ENCODE measurements at regions of chr3 and their contacts with region 1.

Region 1: GRCh38 chr3:147191795-147192385 is 214.5 kb downstream of the ZIC4 start:
- DNase-seq: peak; percentile 31
- H3K4me3 ChIP-seq: no peak overlapping the region
- H3K27ac ChIP-seq: no peak overlapping the region
- H3K4me1 ChIP-seq: no peaks in the 10 kb centered on the region
- H3K27me3 ChIP-seq: no peaks in the 10 kb centered on the region
- CTCF ChIP-seq: peak; percentile 86

Region 2: DNA sequence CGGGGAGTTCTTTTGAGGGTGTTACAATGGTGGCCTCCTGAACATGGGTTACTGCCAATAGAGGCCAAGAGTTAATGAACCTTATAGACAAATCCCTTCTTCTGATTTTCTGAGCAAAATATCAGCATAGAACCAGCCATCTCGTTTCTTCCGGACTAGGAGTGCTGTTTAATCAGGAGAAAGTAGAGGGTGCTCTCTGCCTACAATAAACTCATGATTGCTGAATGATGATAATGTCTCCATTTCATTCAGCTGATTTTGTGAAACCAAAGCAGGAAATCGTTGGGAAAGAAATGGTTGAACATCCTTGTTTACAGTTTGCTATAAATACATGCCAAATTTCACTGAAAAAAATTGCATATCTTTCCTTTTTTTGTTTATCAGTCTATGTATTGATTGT is 444.0 kb before region 1 on chr3:
- CTCF ChIA-PET with region 1: no interaction called
- dilution Hi-C with region 1: no loop called
- in situ Hi-C with region 1: no loop called
- intact Hi-C with region 1: loop called (anchors 1 kb)
- DNase-seq: peak; percentile 12
- H3K4me3 ChIP-seq: no peak overlapping the region
- H3K27ac ChIP-seq: no peak overlapping the region
- H3K4me1 ChIP-seq: peaks cover 10% of the 10 kb centered on the region
- H3K27me3 ChIP-seq: no peaks in the 10 kb centered on the region
- CTCF ChIP-seq: peak; percentile 39 to 44

Region 3: GRCh38 chr3:146817704-146818103 is 374.2 kb before region 1 on chr3:
- CTCF ChIA-PET with region 1: no interaction called
- dilution Hi-C with region 1: no loop called
- in situ Hi-C with region 1: loop called in 1 of 2 experiments (anchors 25 kb)
- intact Hi-C with region 1: loop called (anchors 1 kb)
- DNase-seq: no peak
- H3K4me3 ChIP-seq: no peak overlapping the region
- H3K27ac ChIP-seq: no peak overlapping the region
- H3K4me1 ChIP-seq: no peaks in the 10 kb centered on the region
- H3K27me3 ChIP-seq: peaks cover 4% of the 10 kb centered on the region
- CTCF ChIP-seq: peak; percentile 31 to 42

Region 4: GRCh38 chr3:147119989-147120388 is 71.9 kb before region 1 on chr3:
- CTCF ChIA-PET with region 1: no interaction called
- dilution Hi-C with region 1: no loop called
- in situ Hi-C with region 1: no loop called
- intact Hi-C with region 1: loop called (anchors 1 kb)
- DNase-seq: no peak
- H3K4me3 ChIP-seq: no peak overlapping the region
- H3K27ac ChIP-seq: no peak overlapping the region
- H3K4me1 ChIP-seq: no peaks in the 10 kb centered on the region
- H3K27me3 ChIP-seq: peaks cover 4% of the 10 kb centered on the region
- CTCF ChIP-seq: peak; percentile 26 to 53

Measured in mammary epithelial cell (primary cell).